Activated T-helper 1 cell treated with anti-CD3 and anti-CD28 coated beads, Interleukin-12 subunit alpha, Interleukin-12 subunit beta, Interleukin-2, Interleukin-4 antibody, amounts not matched to agents 30 ng/mL and 10 ng/mL and 1 ng/mL, durations not matched to agents 14 hours and 24 hours and 36 hours (primary cell): ENCODE measurements at regions of chr1 and their contacts with region 1.

Region 1: GRCh38 chr1:51499694-51500093 is 19.4 kb downstream of the EPS15 start:
- DNase-seq: no peak
- H3K4me3 Mint-ChIP-seq: no peak overlapping the region
- H3K27ac Mint-ChIP-seq: no peak overlapping the region
- H3K4me1 Mint-ChIP-seq: peaks cover 12% of the 10 kb centered on the region
- H3K27me3 Mint-ChIP-seq: no peaks in the 10 kb centered on the region

Region 2: GRCh38 chr1:51445351-51446090 is 54.2 kb before region 1 on chr1:
- intact Hi-C with region 1: loop called (anchors 2 kb)
- DNase-seq: no peak
- H3K4me3 Mint-ChIP-seq: no peak overlapping the region
- H3K27ac Mint-ChIP-seq: no peak overlapping the region
- H3K4me1 Mint-ChIP-seq: peaks cover 30% of the 10 kb centered on the region
- H3K27me3 Mint-ChIP-seq: no peaks in the 10 kb centered on the region